ENCODE measurements at regions of chr7 and their contacts with region 1.

Region 1: DNA sequence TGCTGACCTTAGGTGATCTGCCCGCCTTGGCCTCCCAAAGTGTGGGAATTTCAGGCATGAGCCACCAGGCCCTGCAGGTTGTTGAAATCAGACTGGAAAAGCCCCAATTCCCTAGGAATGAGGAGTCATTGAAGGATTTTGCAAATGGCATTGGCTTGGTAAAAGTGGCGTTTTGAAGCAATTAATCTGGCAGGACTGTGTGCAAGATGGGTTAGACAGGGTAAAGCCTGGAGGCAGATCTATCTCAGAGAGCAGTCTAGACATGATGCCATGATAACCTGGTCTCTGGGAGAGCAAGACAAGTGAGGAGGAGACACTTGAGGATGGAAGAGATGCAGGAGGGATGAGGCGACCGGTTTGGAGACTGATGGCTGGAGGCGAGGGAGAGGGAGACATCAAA is 45.7 kb upstream of the UBE2H start:
- DNase-seq: no peak
- H3K4me3 ChIP-seq: no peak overlapping the region
- H3K4me3 Mint-ChIP-seq: no peak overlapping the region
- H3K27ac Mint-ChIP-seq: no peak overlapping the region
- H3K4me1 ChIP-seq: no peaks in the 10 kb centered on the region
- H3K4me1 Mint-ChIP-seq: no peaks in the 10 kb centered on the region
- H3K27me3 ChIP-seq: no peaks in the 10 kb centered on the region
- H3K27me3 Mint-ChIP-seq: no peaks in the 10 kb centered on the region
- CTCF ChIP-seq: no peak

Region 2: DNA sequence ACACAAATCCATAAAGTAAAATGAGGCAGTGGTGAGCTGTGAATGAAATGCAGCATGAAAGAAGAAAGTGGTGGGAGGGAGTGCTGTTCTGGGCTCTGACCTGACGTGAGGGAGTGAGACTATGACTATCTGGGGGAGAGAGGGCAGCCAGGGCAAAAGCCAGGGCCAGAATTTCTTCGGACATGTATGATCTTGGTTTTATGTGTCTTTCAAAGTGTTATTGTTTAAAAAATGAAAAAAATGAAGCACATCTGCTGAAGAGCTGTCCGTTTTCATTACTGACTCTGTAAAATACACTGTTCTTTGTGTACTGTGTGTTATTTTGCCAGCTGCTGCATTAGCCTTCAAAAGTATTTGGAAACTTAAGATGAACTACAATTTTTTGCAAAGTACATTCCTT is 805.8 kb after region 1 on chr7:
- CTCF ChIA-PET with region 1: interaction called, 10 read pairs
- POLR2A ChIA-PET with region 1: no interaction called
- intact Hi-C with region 1: no loop called
- DNase-seq: no peak
- H3K4me3 ChIP-seq: no peak overlapping the region
- H3K4me3 Mint-ChIP-seq: no peak overlapping the region
- H3K27ac Mint-ChIP-seq: no peak overlapping the region
- H3K4me1 ChIP-seq: no peaks in the 10 kb centered on the region
- H3K4me1 Mint-ChIP-seq: no peaks in the 10 kb centered on the region
- H3K27me3 ChIP-seq: no peaks in the 10 kb centered on the region; the same call in 1 of the 2 replicates
- H3K27me3 Mint-ChIP-seq: peaks cover 15% of the 10 kb centered on the region
- CTCF ChIP-seq: no peak

Measured in Caco-2 (cell line).